Mammary epithelial cell (primary cell): ENCODE measurements at regions of chr5 and their contacts with region 1.

Region 1: DNA sequence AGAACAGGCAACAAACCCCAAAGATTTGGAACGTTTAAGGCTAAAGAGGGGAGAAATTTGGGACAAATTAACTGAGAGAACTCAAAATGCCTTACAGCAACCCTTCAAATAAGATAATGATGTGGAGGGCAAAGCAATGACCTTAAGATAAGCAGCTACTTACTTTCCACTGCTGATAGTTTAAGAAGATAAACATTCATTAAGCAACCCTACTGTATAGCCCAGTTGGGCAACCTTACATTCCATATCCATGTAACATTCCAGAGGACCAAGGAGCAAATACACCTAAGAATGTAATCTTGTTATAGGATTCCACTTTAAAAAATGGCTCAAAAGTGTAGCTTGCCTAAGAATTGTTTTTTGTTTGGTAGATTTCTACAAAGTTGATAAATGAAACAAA is 14.8 kb downstream of the ETF1 start:
- DNase-seq: no peak
- H3K4me3 ChIP-seq: no peak overlapping the region
- H3K27ac ChIP-seq: no peak overlapping the region
- H3K4me1 ChIP-seq: peaks cover 9% of the 10 kb centered on the region
- H3K27me3 ChIP-seq: no peaks in the 10 kb centered on the region
- CTCF ChIP-seq: no peak

Region 2: GRCh38 chr5:138469540-138470321 is 58.5 kb before region 1 on chr5:
- CTCF ChIA-PET with region 1: no interaction called
- dilution Hi-C with region 1: loop called (anchors 5 kb)
- in situ Hi-C with region 1: no loop called
- intact Hi-C with region 1: no loop called
- DNase-seq: peak; percentile 53
- H3K4me3 ChIP-seq: no peak overlapping the region
- H3K27ac ChIP-seq: no peak overlapping the region
- H3K4me1 ChIP-seq: peaks cover 32% of the 10 kb centered on the region
- H3K27me3 ChIP-seq: no peaks in the 10 kb centered on the region
- CTCF ChIP-seq: no peak